H1 (cell line): ENCODE measurements at regions of chr1 and their contacts with region 1.

Region 1: GRCh38 chr1:23598424-23598823 is 39.1 kb upstream of the ID3 start:
- DNase-seq: peak; percentile 86
- H3K4me3 ChIP-seq: peak overlapping the region in 1 of 4 experiments; percentile 6; a peak in 3 of 8 replicates
- H3K27ac ChIP-seq: peak overlapping the region; percentile 48; the same call in 1 of the 2 replicates
- H3K4me1 ChIP-seq: peaks cover 16 to 43% (median 18%) of the 10 kb centered on the region in 4 experiments
- H3K27me3 ChIP-seq: no peaks in the 10 kb centered on the region; a peak in 1 of 7 replicates
- CTCF ChIP-seq: peak in 1 of 3 experiments; percentile 13; a peak in 1 of 4 replicates
- EP300 ChIP-seq: peak in 1 of 2 experiments; percentile 92; a peak in 2 of 3 replicates
- POLR2A ChIP-seq: no peak
- RAD21 ChIP-seq: peak in 1 of 2 experiments; percentile 28; a peak in 2 of 4 replicates

Region 2: DNA sequence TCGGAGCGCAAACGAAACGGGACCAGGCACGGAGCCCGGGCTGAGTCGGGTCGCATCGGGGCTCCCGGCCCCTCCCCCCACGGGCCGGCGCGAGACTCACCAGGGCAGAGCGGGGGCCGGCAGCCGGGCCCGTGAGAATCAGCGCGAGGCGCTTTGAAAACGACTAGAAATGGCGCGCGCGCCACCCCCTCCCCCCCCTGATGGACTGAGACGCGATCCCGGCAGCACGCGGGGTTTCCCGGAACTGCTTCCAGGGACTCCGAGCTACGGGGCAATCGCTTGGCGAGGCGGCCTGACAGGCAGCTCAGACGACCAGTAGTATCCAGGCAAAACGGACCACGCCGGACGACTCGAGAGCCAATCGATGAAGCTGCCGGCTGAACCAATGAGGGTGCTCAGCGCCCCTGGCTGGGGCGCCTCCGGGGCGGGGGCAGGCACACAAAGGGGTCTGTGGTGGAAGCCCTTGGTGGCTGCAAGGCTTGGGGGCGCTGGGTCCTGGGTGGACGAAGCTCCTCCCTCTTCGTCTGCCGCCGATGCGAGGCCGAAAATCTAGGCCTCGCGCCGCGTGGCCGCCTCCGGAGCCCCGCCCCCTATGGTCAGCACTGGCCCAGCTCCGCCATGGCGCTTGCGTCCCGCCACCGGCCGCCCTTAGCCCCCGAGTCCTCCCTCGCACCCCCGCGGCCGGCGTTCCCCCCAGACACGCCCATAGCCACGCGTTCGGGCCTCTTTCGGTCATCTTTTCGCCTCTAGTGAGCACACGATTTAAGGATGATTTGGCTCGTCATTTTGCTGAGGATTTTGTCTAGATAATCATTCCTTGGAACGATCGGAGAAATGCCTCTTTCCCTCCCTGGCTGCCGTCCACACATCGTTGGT is 254.1 kb before region 1 on chr1 and contains the start of gene HNRNPR:
- CTCF ChIA-PET with region 1: no interaction called
- POLR2A ChIA-PET with region 1: no interaction called
- DNase-seq: peak; percentile 99 to 100
- H3K4me3 ChIP-seq: peak within 1 kb of the TSS; percentile 87 to 91 (median 90)
- H3K27ac ChIP-seq: peak within 1 kb of the TSS; percentile 85
- H3K4me1 ChIP-seq: peaks cover 0 to 8% (median 3%) of the 10 kb centered on the region in 4 experiments; a peak in 1 of 7 replicates
- H3K27me3 ChIP-seq: peaks cover 2 to 29% (median 15%) of the 10 kb centered on the region in 4 experiments
- CTCF ChIP-seq: no peak
- EP300 ChIP-seq: no peak
- POLR2A ChIP-seq: peak in 1 of 2 experiments; percentile 87; a peak in 2 of 3 replicates
- RAD21 ChIP-seq: no peak
- total RNA-seq, gene HNRNPR: 203 and 214 TPM in 2 replicates

Region 3: GRCh38 chr1:23564529-23565122 is 33.8 kb before region 1 on chr1:
- CTCF ChIA-PET with region 1: interaction called, 11 read pairs
- POLR2A ChIA-PET with region 1: interaction called, 547 read pairs
- DNase-seq: no peak
- H3K4me3 ChIP-seq: no peak overlapping the region
- H3K27ac ChIP-seq: no peak overlapping the region
- H3K4me1 ChIP-seq: peaks cover 16 to 36% (median 20%) of the 10 kb centered on the region in 4 experiments
- H3K27me3 ChIP-seq: peaks cover 0 to 4% (median 0%) of the 10 kb centered on the region in 4 experiments; a peak in 4 of 7 replicates
- CTCF ChIP-seq: no peak
- EP300 ChIP-seq: no peak
- POLR2A ChIP-seq: no peak
- RAD21 ChIP-seq: no peak

Region 4: DNA sequence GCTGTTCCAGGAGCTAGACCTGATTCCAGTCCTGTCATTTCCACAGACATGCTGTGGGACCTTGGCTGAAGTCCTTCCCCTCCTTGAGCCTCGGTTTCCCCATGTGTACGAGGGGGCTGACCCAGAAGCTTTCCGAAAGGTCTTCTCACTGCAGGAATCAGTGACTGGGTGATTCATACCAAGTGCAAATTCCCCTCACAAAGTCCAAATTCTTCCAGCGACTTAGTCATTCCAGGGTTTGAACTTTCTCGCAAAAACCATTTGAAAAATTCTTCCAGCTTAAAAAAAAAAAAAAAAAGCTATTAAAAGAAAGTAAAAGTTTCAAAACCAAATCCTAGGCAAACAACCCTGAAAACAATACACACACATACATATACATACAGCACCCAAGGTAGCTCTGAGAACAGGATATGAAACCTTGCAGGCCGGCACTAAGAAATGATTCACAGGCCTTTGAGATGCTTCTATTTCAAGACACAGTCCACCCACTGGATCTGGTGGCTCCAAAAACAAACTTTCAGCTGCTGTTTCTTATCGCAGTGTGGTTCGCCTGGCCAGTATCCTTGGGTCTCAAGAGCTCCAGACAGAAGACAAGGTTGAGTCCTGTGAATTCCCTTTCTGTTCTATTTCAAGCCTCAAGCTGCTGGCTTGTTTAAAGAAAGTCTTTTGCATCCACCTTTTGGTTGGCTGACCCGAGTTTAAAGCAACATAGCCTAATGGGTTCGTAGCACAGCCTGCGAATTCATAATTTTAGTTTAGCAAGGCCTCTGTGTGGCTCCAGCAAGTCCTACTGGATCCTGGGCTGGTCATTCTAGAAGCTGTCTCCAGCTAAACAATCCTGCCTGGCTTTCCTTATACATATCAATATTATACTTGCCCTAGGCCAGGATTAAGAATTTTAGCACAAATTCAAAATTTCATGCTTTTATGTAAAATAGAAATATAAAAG is 21.1 kb before region 1 on chr1:
- CTCF ChIA-PET with region 1: interaction called, 5 read pairs
- POLR2A ChIA-PET with region 1: interaction called, 17 read pairs
- DNase-seq: no peak
- H3K4me3 ChIP-seq: no peak overlapping the region
- H3K27ac ChIP-seq: no peak overlapping the region
- H3K4me1 ChIP-seq: peaks cover 2 to 6% (median 3%) of the 10 kb centered on the region in 4 experiments; a peak in 4 of 7 replicates
- H3K27me3 ChIP-seq: no peaks in the 10 kb centered on the region
- CTCF ChIP-seq: no peak
- EP300 ChIP-seq: no peak
- POLR2A ChIP-seq: no peak
- RAD21 ChIP-seq: no peak

Region 5: DNA sequence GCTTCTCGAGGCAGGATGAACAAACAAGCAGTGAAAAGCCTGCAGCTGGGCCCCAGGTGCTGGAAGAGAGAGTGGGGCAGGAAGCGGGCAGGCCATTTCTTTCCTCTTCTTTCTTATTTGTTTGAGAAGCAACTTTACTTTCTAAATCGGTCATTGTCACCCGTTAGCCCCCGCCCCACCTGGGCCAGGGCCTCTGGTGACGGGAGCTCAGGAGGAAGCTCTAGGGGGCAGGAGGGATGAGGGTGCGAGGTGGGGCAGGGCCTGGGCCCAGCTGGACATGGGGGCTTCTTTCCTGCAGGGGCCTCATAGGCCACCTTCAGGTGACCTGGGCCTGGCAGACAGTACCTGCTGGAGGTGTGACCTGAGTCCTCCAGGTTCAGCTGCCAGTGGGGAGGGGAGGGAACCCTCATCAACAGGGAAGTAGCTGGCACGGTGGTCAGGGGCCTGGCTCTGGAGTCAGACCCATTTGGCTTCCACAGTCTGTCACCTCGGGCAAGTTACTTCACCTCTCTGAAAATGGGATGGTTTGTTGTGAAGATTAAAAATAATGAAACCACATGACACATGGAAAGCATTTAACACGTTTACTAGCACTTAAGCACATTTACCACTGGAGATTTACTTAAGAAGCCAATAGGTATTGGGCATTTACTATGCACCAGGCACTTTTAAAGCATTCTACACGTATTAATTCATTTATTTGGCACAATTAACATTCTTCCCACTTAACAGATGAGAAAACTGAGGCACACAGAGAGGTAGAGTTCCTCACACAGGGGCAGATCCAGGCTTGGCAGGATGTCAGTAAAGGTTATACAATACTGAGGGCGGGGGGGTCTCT is 15.0 kb after region 1 on chr1:
- CTCF ChIA-PET with region 1: interaction called, 10 read pairs
- POLR2A ChIA-PET with region 1: interaction called, 39 read pairs
- DNase-seq: no peak
- H3K4me3 ChIP-seq: no peak overlapping the region
- H3K27ac ChIP-seq: 0 out of 2 replicates have a peak overlapping the region, but pooled peaks have one; percentile 25
- H3K4me1 ChIP-seq: peaks cover 0 to 11% (median 4%) of the 10 kb centered on the region in 4 experiments; a peak in 5 of 7 replicates
- H3K27me3 ChIP-seq: no peaks in the 10 kb centered on the region
- CTCF ChIP-seq: no peak
- EP300 ChIP-seq: no peak
- POLR2A ChIP-seq: no peak
- RAD21 ChIP-seq: no peak

Region 6: DNA sequence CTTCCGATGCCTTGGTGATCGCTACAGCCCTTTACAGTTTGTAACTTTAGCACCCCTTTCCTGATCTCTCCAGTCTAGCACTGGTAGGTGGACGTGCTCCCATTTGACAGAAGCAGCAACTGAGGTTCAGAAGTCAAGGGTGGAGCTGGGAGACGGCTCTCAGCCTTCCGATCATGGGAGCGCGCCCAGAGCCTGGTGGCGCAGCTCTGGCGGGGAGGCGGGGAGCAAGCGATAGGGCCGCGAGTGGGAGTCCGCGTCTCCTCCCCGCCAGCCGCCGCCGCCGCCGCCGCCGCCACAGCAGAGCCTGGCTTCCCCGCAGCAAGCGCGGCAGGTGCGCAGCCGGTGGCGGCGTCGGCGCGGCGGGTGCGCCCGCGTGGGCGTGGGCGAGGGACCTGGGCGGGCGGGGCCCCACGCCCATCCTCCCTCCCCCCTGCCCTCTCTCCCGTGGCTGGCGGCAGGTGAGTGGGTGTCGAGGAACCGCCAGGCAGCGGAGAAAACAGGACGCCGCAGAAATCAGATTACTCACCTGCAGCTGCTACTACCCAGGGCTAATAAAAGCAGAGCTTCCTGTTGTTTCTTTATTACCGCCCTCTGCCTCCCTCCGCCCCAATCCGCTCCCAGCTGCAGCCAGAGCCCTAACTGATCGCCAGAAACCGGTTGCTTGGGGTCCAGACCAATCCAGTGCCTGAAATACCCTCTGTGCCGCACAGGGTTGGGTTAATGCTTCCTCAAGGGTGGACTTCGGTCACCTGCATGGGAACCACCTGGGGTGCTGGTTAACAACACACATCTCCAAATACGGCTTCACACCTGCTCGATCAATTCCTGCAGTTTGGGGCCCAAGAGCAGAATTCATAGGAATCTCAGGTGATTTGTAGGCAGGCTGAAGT is 21.1 kb after region 1 on chr1:
- CTCF ChIA-PET with region 1: interaction called, 3 read pairs
- POLR2A ChIA-PET with region 1: interaction called, 39 read pairs
- DNase-seq: peak in 1 of 2 experiments; percentile 72
- H3K4me3 ChIP-seq: peak overlapping the region; percentile 6 to 55 (median 28)
- H3K27ac ChIP-seq: no peak overlapping the region
- H3K4me1 ChIP-seq: peaks cover 4 to 17% (median 9%) of the 10 kb centered on the region in 4 experiments; a peak in 6 of 7 replicates
- H3K27me3 ChIP-seq: peaks cover 0 to 19% (median 13%) of the 10 kb centered on the region in 4 experiments; a peak in 5 of 7 replicates
- CTCF ChIP-seq: no peak
- EP300 ChIP-seq: no peak
- POLR2A ChIP-seq: no peak
- RAD21 ChIP-seq: no peak

Region 7: GRCh38 chr1:24027838-24028468 is 429.5 kb after region 1 on chr1:
- CTCF ChIA-PET with region 1: no interaction called
- POLR2A ChIA-PET with region 1: no interaction called
- DNase-seq: no peak
- H3K4me3 ChIP-seq: no peak overlapping the region
- H3K27ac ChIP-seq: no peak overlapping the region
- H3K4me1 ChIP-seq: no peaks in the 10 kb centered on the region
- H3K27me3 ChIP-seq: no peaks in the 10 kb centered on the region
- CTCF ChIP-seq: peak in 1 of 3 experiments; percentile 44; a peak in 2 of 4 replicates
- EP300 ChIP-seq: no peak
- POLR2A ChIP-seq: no peak
- RAD21 ChIP-seq: peak; percentile 31 to 37